Heart right ventricle (tissue), 16 donors: ENCODE measurements at regions of chr10 and their contacts with region 1.

Region 1: DNA sequence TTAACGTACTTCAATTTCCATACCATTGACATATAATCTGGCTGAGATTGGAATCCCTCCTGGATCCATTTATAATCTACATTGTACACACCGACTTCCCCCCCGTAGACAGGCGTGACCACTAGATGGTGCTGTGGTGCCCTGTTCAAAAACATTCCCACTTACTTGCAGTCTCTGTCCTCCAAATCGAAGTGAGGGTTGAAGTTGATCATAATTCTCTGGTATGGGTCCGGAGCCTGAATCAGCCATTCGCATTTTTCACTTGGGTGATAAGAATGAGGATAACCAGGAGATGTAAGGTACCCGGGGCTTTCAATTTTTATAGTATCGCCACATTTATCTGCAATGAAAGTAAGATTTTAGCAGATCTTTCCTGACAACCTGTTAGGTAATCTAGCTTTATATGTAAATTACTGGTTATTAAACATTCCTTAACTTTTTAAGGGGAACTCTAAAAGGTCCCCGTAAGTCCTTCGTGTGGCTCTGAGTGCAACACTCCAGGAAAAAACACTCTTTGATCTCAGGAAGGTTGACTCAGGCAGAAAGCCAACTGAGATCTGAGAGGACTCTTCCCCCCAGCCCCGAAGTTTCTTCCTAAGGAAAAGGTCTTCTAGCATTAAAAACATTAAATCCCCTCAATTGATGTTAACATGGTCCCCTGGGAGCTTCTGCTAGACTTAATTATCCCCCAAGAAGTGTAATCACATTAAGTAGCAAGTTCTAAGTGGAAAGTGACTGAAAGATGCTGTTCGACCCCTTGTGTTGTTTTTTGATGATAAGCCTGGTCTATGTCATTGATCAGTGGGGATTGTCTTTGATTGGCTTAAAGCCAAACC is 3.7 kb downstream of the NRP1 start:
- DNase-seq: peak; percentile 84 to 92
- ATAC-seq: peak in 6 of 8 donors; percentile 18 to 40 (median 30)
- H3K4me3 ChIP-seq: peak overlapping the region; percentile 71 to 95 (median 92)
- H3K27ac ChIP-seq: peak overlapping the region in 9 of 10 donors; percentile 95 to 100 (median 99)
- H3K4me1 ChIP-seq: peaks cover 3 to 59% (median 47%) of the 10 kb centered on the region in 9 donors
- H3K27me3 ChIP-seq: peaks cover 0 to 11% (median 0%) of the 10 kb centered on the region in 7 donors
- CTCF ChIP-seq: peak; percentile 87 to 96 (median 93)

Region 2: DNA sequence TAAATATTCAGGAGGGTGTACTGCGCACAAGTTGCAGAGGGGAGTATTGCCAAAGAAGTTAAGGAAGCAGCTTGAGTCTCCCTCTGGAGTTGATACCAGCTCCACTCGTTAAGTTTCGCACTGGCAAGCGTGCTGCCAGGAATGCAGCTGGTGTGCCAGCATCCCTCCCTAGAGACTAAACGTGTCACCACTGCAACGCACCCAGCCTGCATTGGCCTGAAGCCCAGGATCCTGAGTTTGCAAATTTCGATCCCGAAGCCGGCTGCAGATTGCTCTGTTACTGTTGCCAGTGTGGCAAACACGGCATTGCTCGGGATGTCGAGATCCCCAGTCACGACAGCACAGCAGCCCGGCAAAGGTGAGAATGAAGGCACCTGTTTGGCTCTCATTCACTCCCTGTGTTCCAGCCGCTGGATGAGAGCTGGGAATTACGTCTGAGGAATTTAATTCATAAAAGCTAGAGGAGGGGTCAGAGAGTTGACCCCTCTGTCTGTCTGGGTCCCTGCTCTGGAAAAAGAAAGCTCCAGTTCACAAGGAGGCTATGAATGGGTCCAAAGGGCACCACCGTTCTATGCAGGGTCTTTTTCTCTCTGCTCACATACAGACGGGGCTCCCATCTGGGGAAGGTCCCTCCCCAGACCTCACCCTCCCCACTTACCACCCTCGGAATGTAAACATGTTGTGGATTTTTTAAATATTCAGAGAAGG is 57.3 kb before region 1 on chr10:
- intact Hi-C with region 1: loop called in 3 of 10 experiments (anchors 5 kb)
- DNase-seq: peak; percentile 86 to 87
- ATAC-seq: peak; percentile 70 to 95 (median 90)
- H3K4me3 ChIP-seq: peak overlapping the region in 8 of 10 donors; percentile 4 to 39 (median 30)
- H3K27ac ChIP-seq: peak overlapping the region; percentile 66 to 99 (median 86)
- H3K4me1 ChIP-seq: peaks cover 20 to 99% (median 77%) of the 10 kb centered on the region in 9 donors
- H3K27me3 ChIP-seq: no peaks in the 10 kb centered on the region
- CTCF ChIP-seq: peak in 4 of 9 donors; percentile 7 to 37 (median 33)

Region 3: DNA sequence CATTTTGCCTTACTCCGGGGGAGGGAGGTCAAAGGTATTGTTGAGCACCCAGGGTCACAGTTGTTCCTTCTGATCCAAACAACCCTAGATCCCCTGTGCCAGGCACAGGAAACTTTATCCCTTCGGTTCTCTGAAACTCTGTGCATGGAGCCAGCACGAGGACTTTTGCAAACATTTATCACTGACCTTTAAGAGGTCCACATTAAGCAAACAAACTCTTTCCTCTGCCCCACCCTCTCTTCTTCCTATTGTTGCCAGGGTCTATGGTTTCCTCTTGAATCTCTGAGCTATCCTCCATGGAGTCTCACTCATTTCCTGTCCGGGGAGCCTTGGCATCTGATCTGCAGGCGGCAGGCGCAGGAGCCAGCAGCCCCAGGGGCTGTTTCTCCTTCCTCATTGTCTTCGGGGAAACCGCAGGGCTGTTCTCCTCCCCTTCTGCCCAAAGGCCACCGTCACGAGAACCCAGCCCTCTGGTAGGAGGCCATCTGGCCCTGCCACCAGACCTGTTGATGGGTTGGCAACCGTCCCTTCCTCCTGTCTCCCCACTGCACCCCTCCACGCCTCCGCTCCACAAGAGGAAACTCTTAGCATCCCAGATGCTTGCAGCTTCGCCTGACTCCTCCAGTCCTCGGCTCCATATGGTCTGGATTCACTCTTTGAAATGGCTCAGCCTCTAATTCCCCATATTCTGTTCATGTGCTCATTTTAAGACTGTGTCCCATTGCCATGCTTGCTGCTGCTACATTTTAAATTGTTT is 331.0 kb after region 1 on chr10:
- intact Hi-C with region 1: loop called in 2 of 10 experiments (anchors 5 to 10 kb)
- DNase-seq: peak; percentile 66 to 67
- ATAC-seq: peak; percentile 78 to 91 (median 82)
- H3K4me3 ChIP-seq: peak overlapping the region in 1 of 10 donors; percentile 15
- H3K27ac ChIP-seq: peak overlapping the region in 7 of 10 donors; percentile 32 to 73 (median 51)
- H3K4me1 ChIP-seq: peaks cover 0 to 44% (median 20%) of the 10 kb centered on the region in 9 donors
- H3K27me3 ChIP-seq: no peaks in the 10 kb centered on the region
- CTCF ChIP-seq: no peak

Region 4: GRCh38 chr10:33674986-33675599 is 344.3 kb after region 1 on chr10:
- intact Hi-C with region 1: no loop called
- DNase-seq: peak in 1 of 2 donors; percentile 37
- ATAC-seq: peak in 7 of 8 donors; percentile 37 to 91 (median 79)
- H3K4me3 ChIP-seq: peak overlapping the region in 5 of 10 donors; percentile 19 to 33 (median 29)
- H3K27ac ChIP-seq: peak overlapping the region in 9 of 10 donors; percentile 50 to 86 (median 63)
- H3K4me1 ChIP-seq: peaks cover 0 to 34% (median 9%) of the 10 kb centered on the region in 9 donors
- H3K27me3 ChIP-seq: no peaks in the 10 kb centered on the region
- CTCF ChIP-seq: no peak

Region 5: GRCh38 chr10:33722067-33722466 is 391.3 kb after region 1 on chr10:
- intact Hi-C with region 1: loop called in 4 of 10 experiments (anchors 5 to 10 kb)
- DNase-seq: no peak
- ATAC-seq: peak in 3 of 8 donors; percentile 21 to 40 (median 34)
- H3K4me3 ChIP-seq: no peak overlapping the region
- H3K27ac ChIP-seq: peak overlapping the region in 6 of 10 donors; percentile 5 to 80 (median 48)
- H3K4me1 ChIP-seq: peaks cover 7 to 54% (median 42%) of the 10 kb centered on the region in 9 donors
- H3K27me3 ChIP-seq: no peaks in the 10 kb centered on the region
- CTCF ChIP-seq: no peak

Region 6: GRCh38 chr10:33893506-33893905 is 562.7 kb after region 1 on chr10:
- intact Hi-C with region 1: loop called in 2 of 10 experiments (anchors 5 kb)
- DNase-seq: no peak
- ATAC-seq: peak in 7 of 8 donors; percentile 62 to 85 (median 67)
- H3K4me3 ChIP-seq: no peak overlapping the region
- H3K27ac ChIP-seq: peak overlapping the region in 2 of 10 donors; percentile 54 to 66
- H3K4me1 ChIP-seq: peaks cover 0 to 15% (median 0%) of the 10 kb centered on the region in 9 donors
- H3K27me3 ChIP-seq: no peaks in the 10 kb centered on the region
- CTCF ChIP-seq: no peak

Region 7: GRCh38 chr10:34637418-34637911 is 1306.7 kb after region 1 on chr10:
- intact Hi-C with region 1: loop called (anchors 2 to 10 kb)
- DNase-seq: peak; percentile 61 to 66
- ATAC-seq: peak; percentile 28 to 71 (median 63)
- H3K4me3 ChIP-seq: no peak overlapping the region
- H3K27ac ChIP-seq: no peak overlapping the region
- H3K4me1 ChIP-seq: peaks cover 3 to 25% (median 17%) of the 10 kb centered on the region in 9 donors
- H3K27me3 ChIP-seq: no peaks in the 10 kb centered on the region
- CTCF ChIP-seq: peak in 8 of 9 donors; percentile 82 to 97 (median 96)